ENCODE measurements at regions of chr1 and their contacts with region 1.

Region 1: DNA sequence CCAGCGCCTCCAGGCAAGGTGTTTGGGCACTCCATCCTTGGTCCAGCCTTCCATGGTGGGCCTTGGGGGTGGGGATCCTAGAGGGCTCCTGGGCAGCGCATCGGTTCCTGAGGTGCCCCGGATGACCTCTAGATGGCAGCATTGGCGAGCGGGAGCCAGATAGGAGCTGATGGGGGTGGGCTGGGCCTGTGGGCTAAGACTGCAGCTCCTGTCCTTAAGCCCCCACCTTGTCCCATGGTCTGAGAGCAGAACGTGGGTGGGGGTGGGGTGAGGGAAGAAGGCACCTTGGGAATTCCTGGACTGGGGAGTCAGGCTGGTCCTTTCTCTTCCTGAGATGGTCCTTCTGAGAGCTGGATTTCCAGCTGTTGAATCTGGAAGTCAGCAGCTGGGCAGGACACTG is 93.4 kb upstream of the CSF3R start:
- DNase-seq: no peak
- H3K4me3 ChIP-seq: no peak overlapping the region
- H3K27me3 ChIP-seq: peaks cover 2% of the 10 kb centered on the region
- CTCF ChIP-seq: peak; percentile 91

Region 2: GRCh38 chr1:37434292-37434907 is 858.3 kb after region 1 on chr1:
- CTCF ChIA-PET with region 1: interaction called, 15 read pairs
- POLR2A ChIA-PET with region 1: no interaction called
- DNase-seq: no peak
- H3K4me3 ChIP-seq: no peak overlapping the region
- H3K27me3 ChIP-seq: peaks cover 9% of the 10 kb centered on the region
- CTCF ChIP-seq: peak; percentile 97